Prostate gland (tissue), 2 donors: ENCODE measurements at regions of chr3 and their contacts with region 1.

Region 1: DNA sequence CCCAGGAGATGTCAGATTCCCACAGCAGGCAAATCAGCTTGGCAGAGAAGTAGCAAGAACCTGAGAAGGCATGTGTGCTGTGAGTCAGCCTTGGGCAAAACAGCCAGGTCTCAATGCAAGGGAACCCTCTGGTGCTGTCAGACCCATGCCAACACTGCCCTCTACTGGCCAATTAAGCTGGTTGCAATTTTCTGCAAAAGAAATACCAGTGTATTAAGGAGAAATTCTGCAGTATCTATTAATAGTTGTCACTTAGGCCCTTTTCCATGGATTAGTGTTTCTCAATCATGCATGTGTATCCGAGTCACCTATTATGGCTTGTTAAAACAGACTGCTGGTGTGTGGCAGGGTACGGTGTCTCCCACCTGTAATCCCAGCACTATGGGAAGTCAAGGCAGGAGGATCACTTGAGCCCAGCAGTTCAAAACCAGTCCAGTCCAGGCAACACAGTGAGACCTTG is 26.2 kb downstream of the MAP4 start:
- DNase-seq: peak; percentile 84
- H3K4me3 ChIP-seq: no peak overlapping the region
- H3K27ac ChIP-seq: no peak overlapping the region
- H3K4me1 ChIP-seq: no peaks in the 10 kb centered on the region
- H3K27me3 ChIP-seq: no peaks in the 10 kb centered on the region
- CTCF ChIP-seq: peak; percentile 85 to 93 (median 90)
- POLR2A ChIP-seq: no peak

Region 2: GRCh38 chr3:47836986-47837385 is 153.0 kb before region 1 on chr3:
- intact Hi-C with region 1: loop called (anchors 1 kb)
- DNase-seq: no peak
- H3K4me3 ChIP-seq: no peak overlapping the region
- H3K27ac ChIP-seq: no peak overlapping the region
- H3K4me1 ChIP-seq: no peaks in the 10 kb centered on the region
- H3K27me3 ChIP-seq: no peaks in the 10 kb centered on the region
- CTCF ChIP-seq: no peak
- POLR2A ChIP-seq: no peak

Region 3: GRCh38 chr3:48018841-48019240 is 28.8 kb after region 1 on chr3:
- intact Hi-C with region 1: no loop called
- DNase-seq: no peak
- H3K4me3 ChIP-seq: no peak overlapping the region
- H3K27ac ChIP-seq: no peak overlapping the region
- H3K4me1 ChIP-seq: peaks cover 4% of the 10 kb centered on the region
- H3K27me3 ChIP-seq: no peaks in the 10 kb centered on the region
- CTCF ChIP-seq: no peak
- POLR2A ChIP-seq: no peak

Region 4: DNA sequence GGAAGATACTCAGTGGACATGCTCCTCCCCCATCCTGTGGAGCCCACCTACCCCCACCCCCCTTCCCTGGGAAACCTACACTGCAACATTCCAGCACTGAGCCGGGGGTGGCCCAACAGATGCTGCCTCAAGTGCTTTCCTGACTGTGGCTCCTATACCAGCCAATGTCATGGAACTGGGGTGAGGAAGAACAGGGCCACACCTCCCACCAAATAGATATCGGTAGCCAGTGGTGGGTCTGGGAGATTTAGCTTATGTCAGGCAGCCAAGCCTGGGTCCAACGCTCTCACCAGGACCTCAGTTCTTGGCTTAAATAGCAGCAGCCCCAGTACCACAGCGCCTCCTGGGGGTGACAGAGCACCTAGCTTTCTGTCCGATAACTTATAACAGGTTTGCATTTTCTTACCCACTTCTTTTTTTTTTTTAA is 168.0 kb after region 1 on chr3:
- intact Hi-C with region 1: loop called (anchors 5 kb)
- DNase-seq: peak; percentile 6
- H3K4me3 ChIP-seq: no peak overlapping the region
- H3K27ac ChIP-seq: no peak overlapping the region
- H3K4me1 ChIP-seq: no peaks in the 10 kb centered on the region
- H3K27me3 ChIP-seq: no peaks in the 10 kb centered on the region
- CTCF ChIP-seq: peak; percentile 11 to 41 (median 28)
- POLR2A ChIP-seq: no peak

Region 5: GRCh38 chr3:49081429-49081828 is 1091.4 kb after region 1 on chr3:
- intact Hi-C with region 1: no loop called
- DNase-seq: no peak
- H3K4me3 ChIP-seq: no peak overlapping the region
- H3K27ac ChIP-seq: no peak overlapping the region
- H3K4me1 ChIP-seq: no peaks in the 10 kb centered on the region
- H3K27me3 ChIP-seq: no peaks in the 10 kb centered on the region
- CTCF ChIP-seq: no peak
- POLR2A ChIP-seq: no peak